GM12878 (cell line): ENCODE measurements at regions of chr7 and their contacts with region 1.

Region 1: DNA sequence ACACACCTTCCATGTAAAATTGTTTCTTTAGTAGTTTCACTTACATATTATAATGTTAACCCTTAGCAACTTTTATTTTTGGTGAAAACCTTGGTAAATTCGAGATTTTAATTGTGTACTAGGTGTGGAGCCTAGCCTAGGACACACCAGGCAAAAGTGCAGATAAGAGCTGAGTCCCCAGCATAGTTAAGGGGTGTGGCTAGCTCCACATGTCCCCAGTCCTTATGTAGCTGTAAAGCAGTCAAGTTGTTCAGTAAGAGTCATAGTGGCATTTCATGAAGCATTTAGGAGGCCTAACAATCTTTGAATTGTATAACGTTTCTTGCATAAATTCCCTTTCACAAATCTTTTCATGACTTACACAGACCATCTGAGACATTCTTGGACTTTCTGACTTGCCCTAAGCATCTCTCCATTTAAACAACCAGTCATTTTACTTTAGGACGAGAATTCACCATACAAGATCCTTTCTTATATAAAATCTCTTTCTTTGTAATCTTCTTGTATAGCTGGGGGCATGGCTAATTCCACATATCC is 53.8 kb upstream of the INHBA start:
- DNase-seq: no peak
- ATAC-seq: no peak
- H3K4me3 ChIP-seq: no peak overlapping the region
- H3K27ac ChIP-seq: no peak overlapping the region
- H3K4me1 ChIP-seq: no peaks in the 10 kb centered on the region
- H3K27me3 ChIP-seq: no peaks in the 10 kb centered on the region
- CTCF ChIP-seq: no peak
- EP300 ChIP-seq: no peak
- POLR2A ChIP-seq: no peak
- RAD21 ChIP-seq: no peak

Region 2: GRCh38 chr7:41731492-41732435 is 24.9 kb before region 1 on chr7:
- CTCF ChIA-PET with region 1: no interaction called
- POLR2A ChIA-PET with region 1: no interaction called
- RAD21 ChIA-PET with region 1: no interaction called
- SMC1A ChIA-PET with region 1: interaction called, 3 read pairs
- in situ Hi-C with region 1: no loop called
- intact Hi-C with region 1: loop called (anchors 2 kb)
- DNase-seq: peak; percentile 66
- ATAC-seq: peak; percentile 95
- H3K4me3 ChIP-seq: no peak overlapping the region
- H3K27ac ChIP-seq: no peak overlapping the region
- H3K4me1 ChIP-seq: peaks cover 7% of the 10 kb centered on the region
- H3K27me3 ChIP-seq: no peaks in the 10 kb centered on the region
- CTCF ChIP-seq: peak in 1 of 3 experiments; percentile 10; a peak in 1 of 6 replicates
- EP300 ChIP-seq: peak in 1 of 2 experiments; percentile 47; a peak in 2 of 4 replicates
- POLR2A ChIP-seq: no peak
- RAD21 ChIP-seq: 0 out of 2 replicates have a peak, but pooled peaks have one; percentile 16